Endothelial cell of umbilical vein (primary cell): ENCODE measurements at regions of chr2 and their contacts with region 1.

Region 1: DNA sequence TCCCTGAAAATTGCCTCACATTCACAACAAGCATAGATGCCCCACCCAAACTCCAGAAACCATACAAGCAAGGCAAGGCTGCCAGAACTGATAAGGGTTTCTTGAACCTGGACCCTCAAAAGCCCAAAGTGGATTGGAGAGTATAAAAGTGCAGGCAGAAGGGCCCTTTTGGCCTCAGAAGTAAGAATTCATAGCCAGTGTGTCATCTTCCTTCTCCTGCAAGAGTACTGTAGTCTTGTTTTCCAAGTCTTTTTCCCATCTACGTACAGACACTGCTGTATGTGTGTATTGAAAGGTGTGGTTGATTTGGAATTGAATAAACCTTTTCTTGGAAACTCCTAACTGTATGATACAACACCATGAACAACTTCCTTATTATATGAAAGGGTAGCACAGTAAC is 46.8 kb downstream of the ZC3H15 start:
- DNase-seq: peak; percentile 76
- H3K4me3 ChIP-seq: no peak overlapping the region
- H3K27ac ChIP-seq: peak overlapping the region; percentile 69
- H3K4me1 ChIP-seq: peaks cover 19% of the 10 kb centered on the region
- H3K27me3 ChIP-seq: no peaks in the 10 kb centered on the region
- CTCF ChIP-seq: no peak
- POLR2A ChIP-seq: no peak

Region 2: GRCh38 chr2:186477790-186478189 is 55.1 kb before region 1 on chr2:
- CTCF ChIA-PET with region 1: no interaction called
- POLR2A ChIA-PET with region 1: no interaction called
- dilution Hi-C with region 1: no loop called
- intact Hi-C with region 1: no loop called
- DNase-seq: no peak
- H3K4me3 ChIP-seq: no peak overlapping the region
- H3K27ac ChIP-seq: no peak overlapping the region
- H3K4me1 ChIP-seq: no peaks in the 10 kb centered on the region
- H3K27me3 ChIP-seq: no peaks in the 10 kb centered on the region
- CTCF ChIP-seq: no peak
- POLR2A ChIP-seq: no peak

Region 3: DNA sequence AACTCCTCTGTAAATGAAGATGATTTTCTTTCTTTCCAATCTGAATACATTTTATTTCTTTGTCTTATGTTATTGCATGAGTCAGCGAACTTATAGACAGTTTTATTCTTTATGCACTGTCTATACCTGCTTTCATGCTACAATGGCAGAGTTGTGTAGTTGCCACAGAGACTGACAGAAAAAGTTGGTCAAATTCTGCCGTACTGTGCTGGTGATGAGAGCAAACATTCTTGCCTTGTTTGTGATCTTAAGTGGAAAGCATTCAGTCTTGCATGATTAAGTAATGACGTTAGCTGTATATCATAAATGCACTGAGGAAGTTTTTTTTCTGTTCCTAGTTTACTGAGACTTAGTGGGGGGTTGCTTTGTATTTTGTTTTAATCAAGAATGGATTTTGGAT is 13.9 kb before region 1 on chr2:
- CTCF ChIA-PET with region 1: interaction called, 11 read pairs
- POLR2A ChIA-PET with region 1: no interaction called
- dilution Hi-C with region 1: no loop called
- intact Hi-C with region 1: no loop called
- DNase-seq: no peak
- H3K4me3 ChIP-seq: no peak overlapping the region
- H3K27ac ChIP-seq: no peak overlapping the region
- H3K4me1 ChIP-seq: no peaks in the 10 kb centered on the region
- H3K27me3 ChIP-seq: no peaks in the 10 kb centered on the region
- CTCF ChIP-seq: no peak
- POLR2A ChIP-seq: no peak

Region 4: DNA sequence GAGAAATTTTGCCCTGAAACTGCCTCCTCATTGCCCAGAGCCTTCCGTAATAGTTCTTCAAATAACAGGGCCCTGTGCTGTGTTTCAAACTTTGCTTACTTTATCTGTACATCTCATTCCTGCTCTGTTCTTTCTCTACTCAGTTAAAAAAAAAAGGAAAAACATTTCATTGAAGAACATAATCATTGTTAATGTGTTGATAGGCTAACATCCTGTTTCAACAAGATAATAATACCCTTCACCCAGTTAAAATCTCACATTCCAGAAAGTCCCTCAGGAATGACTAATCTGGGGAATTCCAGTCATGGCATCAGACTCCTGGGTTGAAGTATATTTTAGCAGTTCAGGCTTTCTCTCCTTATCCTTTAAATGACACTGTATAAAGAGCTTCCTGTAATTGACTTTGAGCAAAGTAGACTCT is 11.4 kb after region 1 on chr2:
- CTCF ChIA-PET with region 1: interaction called, 6 read pairs
- POLR2A ChIA-PET with region 1: no interaction called
- dilution Hi-C with region 1: no loop called
- intact Hi-C with region 1: loop called (anchors 1 kb)
- DNase-seq: peak; percentile 98
- H3K4me3 ChIP-seq: peak overlapping the region in 1 of 3 experiments; percentile 15
- H3K27ac ChIP-seq: peak overlapping the region; percentile 98
- H3K4me1 ChIP-seq: peaks cover 35% of the 10 kb centered on the region
- H3K27me3 ChIP-seq: no peaks in the 10 kb centered on the region
- CTCF ChIP-seq: no peak
- POLR2A ChIP-seq: peak; percentile 31

Region 5: DNA sequence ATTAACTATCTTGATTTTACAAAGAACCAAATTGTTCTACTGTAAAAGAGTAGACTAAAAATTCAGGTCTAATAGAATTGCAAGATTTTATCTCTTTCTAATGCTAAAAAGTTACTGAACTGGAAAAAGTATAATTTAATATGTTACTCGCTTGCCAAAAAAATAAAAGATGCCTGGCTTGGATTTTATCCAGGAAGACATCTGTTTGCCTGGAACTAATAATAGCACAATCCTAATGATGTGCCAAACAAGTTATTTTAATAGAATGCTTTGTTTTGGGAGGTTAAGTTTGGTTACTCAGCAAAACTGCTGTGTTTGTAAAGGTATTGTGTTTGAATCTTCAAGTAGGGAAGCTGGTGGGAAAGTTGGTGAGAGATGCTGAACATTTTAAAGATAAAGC is 335.5 kb after region 1 on chr2:
- CTCF ChIA-PET with region 1: no interaction called
- POLR2A ChIA-PET with region 1: no interaction called
- dilution Hi-C with region 1: no loop called
- intact Hi-C with region 1: no loop called
- DNase-seq: peak; percentile 85
- H3K4me3 ChIP-seq: no peak overlapping the region
- H3K27ac ChIP-seq: no peak overlapping the region
- H3K4me1 ChIP-seq: peaks cover 2% of the 10 kb centered on the region
- H3K27me3 ChIP-seq: no peaks in the 10 kb centered on the region
- CTCF ChIP-seq: no peak
- POLR2A ChIP-seq: no peak